CD4-positive, alpha-beta memory T cell (primary cell): ENCODE measurements at regions of chr12 and their contacts with region 1.

Region 1: DNA sequence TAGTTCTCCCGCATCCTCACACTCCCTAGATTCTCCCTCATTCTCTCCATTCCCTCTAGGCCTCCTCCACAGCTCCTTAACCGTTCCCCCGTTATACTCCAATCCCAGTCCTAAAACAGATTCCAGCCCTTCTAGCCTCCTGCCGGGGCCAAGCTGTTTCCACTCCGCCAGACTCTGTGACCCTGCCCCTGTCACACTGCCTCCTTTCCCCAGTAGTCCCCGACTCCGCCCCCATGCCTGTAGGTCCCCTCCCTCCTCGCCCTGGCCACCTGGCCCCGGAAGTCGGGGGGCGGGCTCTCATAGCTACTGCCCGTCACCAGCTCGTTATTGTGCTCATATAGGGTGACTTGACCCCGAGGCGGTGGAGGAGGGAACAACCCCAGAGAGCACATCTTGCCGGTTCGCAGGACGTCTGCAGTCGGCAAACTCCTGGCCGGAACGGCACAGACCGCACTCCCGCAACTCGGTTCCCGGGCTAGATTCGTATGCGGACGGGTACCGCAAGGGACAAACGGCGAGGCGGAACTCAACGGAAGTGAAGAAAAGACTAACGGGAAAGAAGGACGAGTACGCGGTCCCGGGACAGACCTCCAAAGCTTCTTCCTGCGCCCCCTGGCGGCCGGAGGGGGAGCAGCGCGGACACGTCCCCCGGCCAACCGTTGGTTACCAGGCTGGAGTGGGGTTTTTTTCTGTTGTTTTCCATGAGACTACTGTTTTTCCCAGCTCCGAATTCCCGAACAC is at the start of gene AAAS:
- DNase-seq: peak; percentile 95 to 97 (median 96)
- H3K4me3 ChIP-seq: peak within 1 kb of the TSS; percentile 87 to 94
- H3K4me3 Mint-ChIP-seq: peak within 1 kb of the TSS; percentile 94 to 100 (median 97)
- H3K27ac ChIP-seq: peak within 1 kb of the TSS; percentile 74
- H3K27ac Mint-ChIP-seq: peak within 1 kb of the TSS; percentile 90 to 100 (median 97)
- H3K4me1 ChIP-seq: peaks cover 44% of the 10 kb centered on the region
- H3K4me1 Mint-ChIP-seq: peaks cover 24 to 52% (median 38%) of the 10 kb centered on the region in 4 donors
- H3K27me3 ChIP-seq: no peaks in the 10 kb centered on the region
- H3K27me3 Mint-ChIP-seq: peaks cover 0 to 2% of the 10 kb centered on the region in 2 donors
- total RNA-seq, gene AAAS: 63.6 to 66.5 TPM

Region 2: GRCh38 chr12:53159195-53159839 is 161.9 kb before region 1 on chr12:
- CTCF ChIA-PET with region 1: interaction called, 29 read pairs
- POLR2A ChIA-PET with region 1: interaction called, 10 read pairs
- intact Hi-C with region 1: loop called (anchors 1 kb)
- DNase-seq: peak; percentile 83 to 85 (median 85)
- H3K4me3 ChIP-seq: no peak overlapping the region
- H3K4me3 Mint-ChIP-seq: peak overlapping the region in 2 of 8 donors; percentile 2 to 54
- H3K27ac ChIP-seq: no peak overlapping the region
- H3K27ac Mint-ChIP-seq: peak overlapping the region in 4 of 7 donors; percentile 3 to 87 (median 44)
- H3K4me1 ChIP-seq: peaks cover 10% of the 10 kb centered on the region
- H3K4me1 Mint-ChIP-seq: peaks cover 5 to 8% (median 6%) of the 10 kb centered on the region in 4 donors
- H3K27me3 ChIP-seq: no peaks in the 10 kb centered on the region
- H3K27me3 Mint-ChIP-seq: no peaks in the 10 kb centered on the region

Region 3: GRCh38 chr12:53220801-53221202 is 100.4 kb before region 1 on chr12:
- CTCF ChIA-PET with region 1: interaction called, 6 read pairs
- POLR2A ChIA-PET with region 1: interaction called, 25 read pairs
- intact Hi-C with region 1: no loop called
- DNase-seq: peak; percentile 60 to 85 (median 65)
- H3K4me3 ChIP-seq: peak overlapping the region; percentile 73 to 82
- H3K4me3 Mint-ChIP-seq: peak overlapping the region; percentile 95 to 99 (median 98)
- H3K27ac ChIP-seq: peak overlapping the region; percentile 98
- H3K27ac Mint-ChIP-seq: peak overlapping the region; percentile 93 to 99 (median 97)
- H3K4me1 ChIP-seq: peaks cover 78% of the 10 kb centered on the region
- H3K4me1 Mint-ChIP-seq: peaks cover 63 to 93% (median 72%) of the 10 kb centered on the region in 4 donors
- H3K27me3 ChIP-seq: no peaks in the 10 kb centered on the region
- H3K27me3 Mint-ChIP-seq: no peaks in the 10 kb centered on the region

Region 4: GRCh38 chr12:53279283-53279869 is 41.9 kb before region 1 on chr12:
- CTCF ChIA-PET with region 1: no interaction called
- POLR2A ChIA-PET with region 1: no interaction called
- intact Hi-C with region 1: no loop called
- DNase-seq: no peak
- H3K4me3 ChIP-seq: no peak overlapping the region
- H3K4me3 Mint-ChIP-seq: no peak overlapping the region
- H3K27ac ChIP-seq: no peak overlapping the region
- H3K27ac Mint-ChIP-seq: peak overlapping the region in 2 of 7 donors; percentile 13 to 68
- H3K4me1 ChIP-seq: no peaks in the 10 kb centered on the region
- H3K4me1 Mint-ChIP-seq: no peaks in the 10 kb centered on the region
- H3K27me3 ChIP-seq: no peaks in the 10 kb centered on the region
- H3K27me3 Mint-ChIP-seq: no peaks in the 10 kb centered on the region

Region 5: GRCh38 chr12:53295070-53295890 is 26.0 kb before region 1 on chr12 and contains the start of gene PFDN5:
- CTCF ChIA-PET with region 1: interaction called, 99 read pairs
- POLR2A ChIA-PET with region 1: interaction called, 193 read pairs
- intact Hi-C with region 1: loop called (anchors 1 kb)
- DNase-seq: peak; percentile 87 to 93 (median 91)
- H3K4me3 ChIP-seq: peak within 1 kb of the TSS; percentile 63 to 94
- H3K4me3 Mint-ChIP-seq: peak within 1 kb of the TSS; percentile 98 to 100 (median 99)
- H3K27ac ChIP-seq: peak within 1 kb of the TSS; percentile 81
- H3K27ac Mint-ChIP-seq: peak within 1 kb of the TSS; percentile 97 to 100 (median 99)
- H3K4me1 ChIP-seq: peaks cover 49% of the 10 kb centered on the region
- H3K4me1 Mint-ChIP-seq: peaks cover 23 to 59% (median 44%) of the 10 kb centered on the region in 4 donors
- H3K27me3 ChIP-seq: no peaks in the 10 kb centered on the region
- H3K27me3 Mint-ChIP-seq: no peaks in the 10 kb centered on the region
- total RNA-seq, gene PFDN5: 717 to 718 TPM

Region 6: GRCh38 chr12:53352331-53353256 is 31.4 kb after region 1 on chr12:
- CTCF ChIA-PET with region 1: interaction called, 294 read pairs
- POLR2A ChIA-PET with region 1: interaction called, 6 read pairs
- intact Hi-C with region 1: no loop called
- DNase-seq: peak; percentile 82 to 84 (median 84)
- H3K4me3 ChIP-seq: no peak overlapping the region
- H3K4me3 Mint-ChIP-seq: peak overlapping the region in 2 of 8 donors; percentile 1 to 7
- H3K27ac ChIP-seq: no peak overlapping the region
- H3K27ac Mint-ChIP-seq: peak overlapping the region in 4 of 7 donors; percentile 1 to 70 (median 26)
- H3K4me1 ChIP-seq: no peaks in the 10 kb centered on the region
- H3K4me1 Mint-ChIP-seq: peaks cover 4 to 7% (median 6%) of the 10 kb centered on the region in 4 donors
- H3K27me3 ChIP-seq: no peaks in the 10 kb centered on the region
- H3K27me3 Mint-ChIP-seq: no peaks in the 10 kb centered on the region

Region 7: GRCh38 chr12:53441040-53441833 is 120.0 kb after region 1 on chr12 and contains the start of gene PRR13:
- CTCF ChIA-PET with region 1: interaction called, 3 read pairs
- POLR2A ChIA-PET with region 1: interaction called, 14 read pairs
- intact Hi-C with region 1: no loop called
- DNase-seq: peak; percentile 95 to 100 (median 97)
- H3K4me3 ChIP-seq: peak within 1 kb of the TSS; percentile 75 to 91
- H3K4me3 Mint-ChIP-seq: peak within 1 kb of the TSS; percentile 95 to 99 (median 97)
- H3K27ac ChIP-seq: peak within 1 kb of the TSS; percentile 98
- H3K27ac Mint-ChIP-seq: peak within 1 kb of the TSS; percentile 91 to 99 (median 96)
- H3K4me1 ChIP-seq: peaks cover 40% of the 10 kb centered on the region
- H3K4me1 Mint-ChIP-seq: peaks cover 22 to 59% (median 40%) of the 10 kb centered on the region in 4 donors
- H3K27me3 ChIP-seq: no peaks in the 10 kb centered on the region
- H3K27me3 Mint-ChIP-seq: no peaks in the 10 kb centered on the region
- total RNA-seq, gene PRR13: 242 to 247 TPM

Region 8: GRCh38 chr12:53508534-53509199 is 187.4 kb after region 1 on chr12:
- CTCF ChIA-PET with region 1: interaction called, 7 read pairs
- POLR2A ChIA-PET with region 1: interaction called, 5 read pairs
- intact Hi-C with region 1: loop called (anchors 1 kb)
- DNase-seq: peak; percentile 69 to 78 (median 75)
- H3K4me3 ChIP-seq: no peak overlapping the region
- H3K4me3 Mint-ChIP-seq: peak overlapping the region in 1 of 8 donors; percentile 2
- H3K27ac ChIP-seq: peak overlapping the region; percentile 16
- H3K27ac Mint-ChIP-seq: peak overlapping the region; percentile 14 to 70 (median 47)
- H3K4me1 ChIP-seq: peaks cover 10% of the 10 kb centered on the region
- H3K4me1 Mint-ChIP-seq: peaks cover 5 to 16% (median 8%) of the 10 kb centered on the region in 4 donors
- H3K27me3 ChIP-seq: no peaks in the 10 kb centered on the region
- H3K27me3 Mint-ChIP-seq: no peaks in the 10 kb centered on the region